Panc1 (cell line): ENCODE measurements at regions of chr2 and their contacts with region 1.

Region 1: DNA sequence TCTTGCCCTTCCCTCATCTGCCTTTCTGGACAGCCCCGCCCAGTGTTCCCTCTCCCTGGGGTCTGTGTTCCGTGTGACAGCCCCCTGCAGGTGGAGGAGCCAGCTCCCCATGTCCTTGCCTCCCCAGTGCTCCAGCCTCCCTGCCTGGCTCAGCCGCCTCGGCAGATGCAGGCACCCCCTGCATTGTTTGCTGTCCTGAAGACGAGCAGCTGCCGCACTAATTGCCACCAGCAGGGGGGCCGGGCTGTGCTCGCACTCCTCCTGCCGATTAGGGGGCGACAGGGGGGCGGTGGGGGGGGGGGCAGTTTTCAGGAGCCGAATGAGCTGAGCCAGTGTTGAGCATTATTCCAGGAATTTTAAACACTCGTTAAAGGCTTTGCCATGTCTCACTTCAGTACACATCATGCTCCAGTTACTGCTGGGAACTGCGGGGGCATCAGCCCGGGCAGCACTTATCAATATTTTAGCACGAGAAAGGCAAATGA is 23.3 kb downstream of the SIX3 start:
- DNase-seq: no peak
- ATAC-seq: no peak
- H3K4me3 ChIP-seq: no peak overlapping the region
- H3K27ac ChIP-seq: no peak overlapping the region
- H3K4me1 ChIP-seq: no peaks in the 10 kb centered on the region
- H3K27me3 ChIP-seq: no peaks in the 10 kb centered on the region; the same call in 1 of the 2 replicates
- CTCF ChIP-seq: no peak

Region 2: GRCh38 chr2:44275927-44276303 is 688.9 kb before region 1 on chr2:
- CTCF ChIA-PET with region 1: no interaction called
- POLR2A ChIA-PET with region 1: no interaction called
- in situ Hi-C with region 1: no loop called
- intact Hi-C with region 1: no loop called
- DNase-seq: no peak
- ATAC-seq: peak; percentile 81
- H3K4me3 ChIP-seq: no peak overlapping the region
- H3K27ac ChIP-seq: peak overlapping the region; percentile 71
- H3K4me1 ChIP-seq: 0 out of 2 replicates have a peak, but pooled peaks cover 6% of the 10 kb centered on the region
- H3K27me3 ChIP-seq: no peaks in the 10 kb centered on the region
- CTCF ChIP-seq: no peak

Region 3: GRCh38 chr2:44452069-44452583 is 512.7 kb before region 1 on chr2:
- CTCF ChIA-PET with region 1: interaction called, 10 read pairs
- POLR2A ChIA-PET with region 1: no interaction called
- in situ Hi-C with region 1: no loop called
- intact Hi-C with region 1: no loop called
- DNase-seq: no peak
- ATAC-seq: no peak
- H3K4me3 ChIP-seq: no peak overlapping the region
- H3K27ac ChIP-seq: no peak overlapping the region
- H3K4me1 ChIP-seq: no peaks in the 10 kb centered on the region
- H3K27me3 ChIP-seq: no peaks in the 10 kb centered on the region
- CTCF ChIP-seq: no peak

Region 4: GRCh38 chr2:45210462-45211195 is 245.8 kb after region 1 on chr2:
- CTCF ChIA-PET with region 1: no interaction called
- POLR2A ChIA-PET with region 1: no interaction called
- in situ Hi-C with region 1: no loop called
- intact Hi-C with region 1: no loop called
- DNase-seq: no peak
- ATAC-seq: no peak
- H3K4me3 ChIP-seq: no peak overlapping the region
- H3K27ac ChIP-seq: no peak overlapping the region
- H3K4me1 ChIP-seq: no peaks in the 10 kb centered on the region
- H3K27me3 ChIP-seq: no peaks in the 10 kb centered on the region; the same call in 1 of the 2 replicates
- CTCF ChIP-seq: no peak